ENCODE measurements at regions of chr3 and their contacts with region 1.

Region 1: DNA sequence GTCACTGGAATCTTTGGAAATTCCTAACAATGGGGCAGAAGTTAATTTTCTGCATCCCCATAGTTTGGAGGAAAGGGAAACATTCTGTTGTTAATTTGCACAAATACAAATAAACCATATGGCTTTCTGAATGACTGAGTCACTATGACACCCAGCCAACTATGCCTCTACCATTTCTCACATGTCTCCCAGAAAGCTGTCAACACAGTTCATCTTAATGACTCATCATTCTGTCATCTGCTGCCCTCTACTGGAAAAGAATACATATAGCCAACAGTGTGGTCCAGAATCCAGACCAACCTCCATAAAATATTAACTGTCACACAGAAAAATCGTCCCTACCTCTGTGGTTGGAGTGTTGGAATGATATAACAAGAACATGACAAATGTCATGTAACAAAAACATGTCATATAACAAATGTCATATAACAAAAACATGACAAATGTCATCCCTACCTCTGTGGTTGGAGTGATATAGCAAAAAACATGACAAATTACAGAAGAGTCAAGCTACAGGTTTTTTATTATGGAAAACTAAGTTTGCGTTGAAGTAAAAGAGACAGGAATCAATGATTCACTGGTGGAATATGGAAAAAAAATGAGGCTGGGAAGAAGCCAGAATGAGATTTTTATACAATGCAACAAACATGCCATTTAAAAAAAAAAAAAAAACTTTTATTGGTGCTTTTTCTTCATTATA is 47.7 kb upstream of the GYG1 start:
- DNase-seq: peak; percentile 76
- ATAC-seq: peak; percentile 96
- H3K4me3 ChIP-seq: no peak overlapping the region
- H3K27ac ChIP-seq: no peak overlapping the region
- H3K4me1 ChIP-seq: no peaks in the 10 kb centered on the region
- H3K27me3 ChIP-seq: peaks cover 0 to 16% of the 10 kb centered on the region in 2 experiments; a peak in 2 of 5 replicates
- CTCF ChIP-seq: peak; percentile 85
- EP300 ChIP-seq: no peak
- POLR2A ChIP-seq: no peak
- RAD21 ChIP-seq: peak; percentile 40; the same call in 1 of the 2 replicates

Region 2: GRCh38 chr3:148309390-148310035 is 634.1 kb before region 1 on chr3:
- CTCF ChIA-PET with region 1: interaction called, 12 read pairs
- POLR2A ChIA-PET with region 1: no interaction called
- in situ Hi-C with region 1: no loop called
- intact Hi-C with region 1: loop called (anchors 1 kb)
- DNase-seq: peak; percentile 46
- ATAC-seq: peak; percentile 92
- H3K4me3 ChIP-seq: no peak overlapping the region
- H3K27ac ChIP-seq: no peak overlapping the region
- H3K4me1 ChIP-seq: no peaks in the 10 kb centered on the region
- H3K27me3 ChIP-seq: no peaks in the 10 kb centered on the region
- CTCF ChIP-seq: peak; percentile 64
- EP300 ChIP-seq: no peak
- POLR2A ChIP-seq: no peak
- RAD21 ChIP-seq: peak; percentile 35; the same call in 1 of the 2 replicates

Region 3: DNA sequence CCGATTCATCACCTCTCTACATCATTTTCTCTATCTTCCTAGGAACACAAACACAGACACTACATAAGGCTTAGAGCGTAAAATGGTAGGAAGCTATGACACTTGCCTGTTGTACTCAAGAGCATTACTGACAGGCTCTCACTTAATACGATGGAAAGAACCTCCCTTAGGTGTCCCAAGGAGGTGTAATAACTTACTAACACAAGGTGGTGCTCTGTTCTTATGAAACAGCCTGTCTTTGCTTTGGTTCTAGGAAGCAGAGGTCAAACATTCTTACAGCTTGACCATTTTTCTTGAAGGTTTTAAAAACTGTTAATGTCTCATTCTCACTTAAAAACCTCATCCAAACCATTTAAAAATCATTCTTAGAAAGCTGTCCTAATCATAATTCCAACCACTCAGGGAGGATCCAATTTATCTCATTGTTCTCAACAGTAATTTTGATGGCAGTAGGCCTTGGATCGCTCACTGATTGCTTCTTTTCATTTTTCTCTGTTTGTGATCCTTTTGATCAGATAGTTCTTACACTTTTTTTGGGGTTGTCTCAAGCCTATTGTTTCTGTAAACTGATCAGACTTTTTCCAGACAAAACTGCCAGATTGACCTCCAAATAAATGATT is 563.8 kb before region 1 on chr3:
- CTCF ChIA-PET with region 1: interaction called, 3 read pairs
- POLR2A ChIA-PET with region 1: no interaction called
- in situ Hi-C with region 1: loop called (anchors 5 kb)
- intact Hi-C with region 1: loop called (anchors 5 kb)
- DNase-seq: peak; percentile 71
- ATAC-seq: peak; percentile 98
- H3K4me3 ChIP-seq: no peak overlapping the region
- H3K27ac ChIP-seq: no peak overlapping the region
- H3K4me1 ChIP-seq: no peaks in the 10 kb centered on the region
- H3K27me3 ChIP-seq: no peaks in the 10 kb centered on the region
- CTCF ChIP-seq: peak; percentile 86
- EP300 ChIP-seq: peak in 1 of 2 experiments; percentile 15; a peak in 1 of 4 replicates
- POLR2A ChIP-seq: no peak
- RAD21 ChIP-seq: peak; percentile 73

Region 4: DNA sequence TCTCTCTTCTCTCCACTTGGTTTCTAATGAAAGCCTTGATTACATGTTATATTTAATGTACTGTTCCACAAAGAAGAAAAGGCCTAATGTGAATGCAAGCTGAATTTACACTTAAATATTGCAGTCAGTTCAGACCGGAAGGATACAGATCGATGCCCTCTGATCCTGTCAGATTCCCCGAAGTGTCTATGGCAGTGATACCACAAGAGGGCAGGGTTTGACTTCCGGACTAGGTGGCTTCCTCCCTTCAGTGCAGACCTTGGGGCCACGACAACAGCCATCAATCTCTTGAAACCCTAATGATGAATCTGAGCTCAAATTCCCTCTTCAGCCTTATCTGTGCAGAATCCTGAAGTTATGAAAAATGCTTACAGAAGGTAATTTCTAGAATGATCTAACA is 216.4 kb before region 1 on chr3:
- CTCF ChIA-PET with region 1: interaction called, 7 read pairs
- POLR2A ChIA-PET with region 1: no interaction called
- in situ Hi-C with region 1: loop called (anchors 5 kb)
- intact Hi-C with region 1: loop called (anchors 1 kb)
- DNase-seq: peak; percentile 30
- ATAC-seq: peak; percentile 87
- H3K4me3 ChIP-seq: no peak overlapping the region
- H3K27ac ChIP-seq: no peak overlapping the region
- H3K4me1 ChIP-seq: peaks cover 12% of the 10 kb centered on the region; the same call in 1 of the 2 replicates
- H3K27me3 ChIP-seq: no peaks in the 10 kb centered on the region
- CTCF ChIP-seq: peak; percentile 75
- EP300 ChIP-seq: no peak
- POLR2A ChIP-seq: no peak
- RAD21 ChIP-seq: peak; percentile 22; the same call in 1 of the 2 replicates

Region 5: DNA sequence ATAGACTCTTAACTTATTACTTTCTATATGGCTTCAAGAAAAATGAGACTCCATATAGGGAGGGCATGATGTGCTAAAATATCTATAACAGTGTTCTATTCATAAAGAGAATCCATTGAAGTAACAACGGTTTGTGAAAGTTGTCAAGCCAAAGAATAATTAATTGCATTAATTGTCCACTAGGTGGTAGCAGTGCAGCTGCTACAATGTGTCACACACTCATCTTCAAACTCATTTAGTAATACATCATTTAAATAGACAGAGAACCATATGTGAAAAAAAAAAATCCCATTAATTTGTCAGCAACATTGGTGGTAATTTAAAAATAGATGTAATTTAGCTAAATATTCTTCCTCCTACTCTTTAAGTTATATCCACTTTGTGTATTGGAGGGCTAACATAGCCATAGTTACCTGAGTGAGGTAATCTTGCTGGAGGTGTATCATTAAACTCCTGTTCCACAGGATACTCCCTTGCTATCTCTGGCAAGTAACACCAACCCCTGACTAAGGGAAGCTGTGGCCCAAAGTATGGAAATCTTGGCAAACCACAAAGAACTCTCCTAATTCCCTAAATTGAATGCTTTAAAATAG is 82.3 kb before region 1 on chr3:
- CTCF ChIA-PET with region 1: interaction called, 24 read pairs
- POLR2A ChIA-PET with region 1: no interaction called
- in situ Hi-C with region 1: loop called (anchors 5 kb)
- intact Hi-C with region 1: loop called (anchors 1 kb)
- DNase-seq: peak; percentile 29
- ATAC-seq: 0 out of 3 replicates have a peak, but pooled peaks have one; percentile 49
- H3K4me3 ChIP-seq: no peak overlapping the region
- H3K27ac ChIP-seq: no peak overlapping the region
- H3K4me1 ChIP-seq: no peaks in the 10 kb centered on the region
- H3K27me3 ChIP-seq: no peaks in the 10 kb centered on the region; a peak in 1 of 5 replicates
- CTCF ChIP-seq: peak; percentile 64
- EP300 ChIP-seq: no peak
- POLR2A ChIP-seq: no peak
- RAD21 ChIP-seq: peak; percentile 43; the same call in 1 of the 2 replicates